ENCODE measurements at regions of chr16 and their contacts with region 1.

Region 1: GRCh38 chr16:87587636-87588035 is 14.7 kb upstream of the JPH3 start:
- DNase-seq: no peak
- H3K4me3 ChIP-seq: no peak overlapping the region
- H3K27ac ChIP-seq: no peak overlapping the region
- H3K4me1 ChIP-seq: peaks cover 9 to 23% (median 19%) of the 10 kb centered on the region in 4 donors
- H3K27me3 ChIP-seq: peaks cover 0 to 65% (median 0%) of the 10 kb centered on the region in 4 donors
- CTCF ChIP-seq: no peak
- EP300 ChIP-seq: no peak
- POLR2A ChIP-seq: no peak

Region 2: DNA sequence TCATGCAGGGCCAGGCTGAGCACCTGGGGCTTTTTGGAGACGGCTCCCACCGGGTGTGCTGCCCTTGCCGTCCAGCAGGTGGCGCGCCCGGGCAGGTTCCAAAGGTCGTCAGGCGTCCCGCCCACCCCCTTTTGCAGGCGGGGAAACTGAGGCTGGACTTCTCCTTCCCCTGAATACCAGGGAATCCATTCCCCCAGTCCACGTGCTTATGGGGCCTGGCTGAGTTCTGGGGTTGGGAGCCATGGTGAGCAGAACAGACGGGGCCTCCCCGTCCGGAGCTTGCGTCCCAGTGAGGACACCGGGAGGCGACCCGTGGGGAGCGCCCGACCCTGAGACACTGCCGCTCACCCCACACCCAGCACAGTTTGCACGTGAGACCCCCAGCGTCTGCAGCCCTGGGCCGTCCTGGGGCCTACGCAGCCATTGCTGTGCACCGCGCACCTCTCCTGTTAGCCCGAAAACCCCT is 37.1 kb before region 1 on chr16:
- intact Hi-C with region 1: no loop called
- DNase-seq: no peak
- H3K4me3 ChIP-seq: no peak overlapping the region
- H3K27ac ChIP-seq: no peak overlapping the region
- H3K4me1 ChIP-seq: peaks cover 0 to 8% (median 4%) of the 10 kb centered on the region in 4 donors
- H3K27me3 ChIP-seq: peaks cover 0 to 42% (median 0%) of the 10 kb centered on the region in 4 donors
- CTCF ChIP-seq: peak; percentile 75 to 98 (median 86)
- EP300 ChIP-seq: no peak
- POLR2A ChIP-seq: no peak

Region 3: DNA sequence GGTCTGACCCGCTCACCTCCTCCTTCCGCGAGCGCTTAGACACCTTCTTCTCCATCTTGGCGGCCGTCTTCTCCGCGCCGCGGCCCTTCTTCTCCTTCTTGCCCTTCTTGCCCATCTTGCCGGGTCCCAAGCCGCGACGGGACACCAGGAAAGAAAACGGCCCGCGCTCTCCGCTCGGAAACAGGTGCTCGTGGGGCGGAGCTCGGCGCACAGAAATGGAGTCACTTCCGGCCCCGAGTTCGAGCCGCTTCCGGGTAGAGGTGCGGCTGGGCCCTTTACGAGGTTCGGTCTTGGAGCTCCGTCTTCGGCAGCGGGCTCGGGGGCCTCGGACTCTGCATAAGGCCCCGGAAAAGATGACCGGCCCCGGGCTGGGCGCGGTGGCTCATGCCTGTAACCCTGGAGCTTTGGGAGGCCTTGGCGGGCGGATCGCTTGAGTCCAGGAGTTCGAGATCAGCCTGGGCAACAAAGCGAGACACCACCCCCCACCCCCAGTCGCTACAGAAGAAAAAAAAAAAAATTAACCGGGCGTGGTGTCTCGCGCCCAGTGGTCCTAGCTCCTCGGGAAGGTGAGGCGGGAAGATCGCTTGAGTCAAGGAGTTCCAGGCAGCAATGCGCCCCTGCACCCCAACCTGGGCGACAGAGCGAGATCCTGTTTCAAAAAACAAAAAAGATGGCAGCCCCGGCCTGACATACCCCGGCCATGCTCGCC is 178.3 kb after region 1 on chr16 and contains the start of gene KLHDC4:
- intact Hi-C with region 1: loop called (anchors 2 kb)
- DNase-seq: peak; percentile 97
- H3K4me3 ChIP-seq: peak within 1 kb of the TSS; percentile 86 to 98 (median 96)
- H3K27ac ChIP-seq: peak within 1 kb of the TSS; percentile 86 to 94 (median 89)
- H3K4me1 ChIP-seq: peaks cover 12 to 26% (median 24%) of the 10 kb centered on the region in 4 donors
- H3K27me3 ChIP-seq: no peaks in the 10 kb centered on the region
- CTCF ChIP-seq: peak in 1 of 3 experiments; percentile 26
- EP300 ChIP-seq: no peak
- POLR2A ChIP-seq: peak; percentile 41
- total RNA-seq, gene KLHDC4: 22.2 to 41.5 (median 31.4) TPM